Activated CD4-positive, alpha-beta memory T cell treated with anti-CD3 and anti-CD28 coated beads for 36 hours (primary cell): ENCODE measurements at regions of chr9 and their contacts with region 1.

Region 1: DNA sequence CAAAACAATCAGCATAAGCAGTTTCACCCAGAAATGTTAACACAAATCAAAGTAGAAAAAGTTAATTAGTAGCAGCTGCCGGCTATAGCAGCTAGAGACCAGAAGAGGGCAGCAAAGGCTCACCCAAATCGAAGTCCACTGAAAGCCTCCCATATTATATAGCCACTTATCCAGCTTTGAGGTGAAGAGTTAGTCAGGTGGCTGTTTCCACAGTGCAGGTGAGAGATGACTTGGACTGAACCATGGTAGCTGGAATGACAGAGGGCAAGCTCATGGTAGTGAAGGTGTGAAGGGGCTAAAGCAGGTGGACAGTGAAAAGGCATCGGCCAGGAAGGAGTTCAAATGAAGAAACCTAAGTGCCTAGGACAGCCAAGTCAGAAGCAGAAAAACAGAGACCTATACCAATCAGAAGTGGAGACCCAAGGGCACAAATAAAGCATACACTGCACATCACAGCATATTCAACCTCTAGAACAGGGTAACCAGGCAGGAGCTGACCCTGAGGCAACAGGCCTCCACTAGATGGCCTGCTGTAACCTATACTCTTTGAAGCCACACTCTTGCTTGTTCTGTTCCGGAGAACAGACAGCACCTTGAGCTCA is 7.2 kb upstream of the RNF38 start:
- DNase-seq: peak; percentile 77
- H3K4me3 Mint-ChIP-seq: no peak overlapping the region
- H3K27ac Mint-ChIP-seq: peak overlapping the region; percentile 67
- H3K4me1 Mint-ChIP-seq: peaks cover 10% of the 10 kb centered on the region
- H3K27me3 Mint-ChIP-seq: no peaks in the 10 kb centered on the region

Region 2: GRCh38 chr9:36337865-36338264 is 69.4 kb before region 1 on chr9:
- CTCF ChIA-PET with region 1: no interaction called
- POLR2A ChIA-PET with region 1: no interaction called
- intact Hi-C with region 1: no loop called
- DNase-seq: no peak
- H3K4me3 Mint-ChIP-seq: no peak overlapping the region
- H3K27ac Mint-ChIP-seq: no peak overlapping the region
- H3K4me1 Mint-ChIP-seq: peaks cover 12% of the 10 kb centered on the region
- H3K27me3 Mint-ChIP-seq: no peaks in the 10 kb centered on the region

Region 3: GRCh38 chr9:36436909-36437308 is 29.7 kb after region 1 on chr9:
- CTCF ChIA-PET with region 1: interaction called, 27 read pairs
- POLR2A ChIA-PET with region 1: no interaction called
- intact Hi-C with region 1: no loop called
- DNase-seq: no peak
- H3K4me3 Mint-ChIP-seq: no peak overlapping the region
- H3K27ac Mint-ChIP-seq: no peak overlapping the region
- H3K4me1 Mint-ChIP-seq: peaks cover 21% of the 10 kb centered on the region
- H3K27me3 Mint-ChIP-seq: no peaks in the 10 kb centered on the region

Region 4: GRCh38 chr9:36450110-36450732 is 43.0 kb after region 1 on chr9:
- CTCF ChIA-PET with region 1: interaction called, 40 read pairs
- POLR2A ChIA-PET with region 1: interaction called, 4 read pairs
- intact Hi-C with region 1: loop called (anchors 2 kb)
- DNase-seq: peak; percentile 29
- H3K4me3 Mint-ChIP-seq: no peak overlapping the region
- H3K27ac Mint-ChIP-seq: no peak overlapping the region
- H3K4me1 Mint-ChIP-seq: peaks cover 8% of the 10 kb centered on the region
- H3K27me3 Mint-ChIP-seq: no peaks in the 10 kb centered on the region

Region 5: GRCh38 chr9:36487482-36488388 is 80.5 kb after region 1 on chr9:
- CTCF ChIA-PET with region 1: interaction called, 17 read pairs
- POLR2A ChIA-PET with region 1: interaction called, 5 read pairs
- intact Hi-C with region 1: no loop called
- DNase-seq: peak; percentile 93
- H3K4me3 Mint-ChIP-seq: peak overlapping the region; percentile 85
- H3K27ac Mint-ChIP-seq: peak overlapping the region; percentile 97
- H3K4me1 Mint-ChIP-seq: peaks cover 61% of the 10 kb centered on the region
- H3K27me3 Mint-ChIP-seq: no peaks in the 10 kb centered on the region

Region 6: GRCh38 chr9:36566813-36567221 is 159.6 kb after region 1 on chr9:
- CTCF ChIA-PET with region 1: interaction called, 18 read pairs
- POLR2A ChIA-PET with region 1: no interaction called
- intact Hi-C with region 1: no loop called
- DNase-seq: no peak
- H3K4me3 Mint-ChIP-seq: no peak overlapping the region
- H3K27ac Mint-ChIP-seq: no peak overlapping the region
- H3K4me1 Mint-ChIP-seq: no peaks in the 10 kb centered on the region
- H3K27me3 Mint-ChIP-seq: no peaks in the 10 kb centered on the region

Region 7: DNA sequence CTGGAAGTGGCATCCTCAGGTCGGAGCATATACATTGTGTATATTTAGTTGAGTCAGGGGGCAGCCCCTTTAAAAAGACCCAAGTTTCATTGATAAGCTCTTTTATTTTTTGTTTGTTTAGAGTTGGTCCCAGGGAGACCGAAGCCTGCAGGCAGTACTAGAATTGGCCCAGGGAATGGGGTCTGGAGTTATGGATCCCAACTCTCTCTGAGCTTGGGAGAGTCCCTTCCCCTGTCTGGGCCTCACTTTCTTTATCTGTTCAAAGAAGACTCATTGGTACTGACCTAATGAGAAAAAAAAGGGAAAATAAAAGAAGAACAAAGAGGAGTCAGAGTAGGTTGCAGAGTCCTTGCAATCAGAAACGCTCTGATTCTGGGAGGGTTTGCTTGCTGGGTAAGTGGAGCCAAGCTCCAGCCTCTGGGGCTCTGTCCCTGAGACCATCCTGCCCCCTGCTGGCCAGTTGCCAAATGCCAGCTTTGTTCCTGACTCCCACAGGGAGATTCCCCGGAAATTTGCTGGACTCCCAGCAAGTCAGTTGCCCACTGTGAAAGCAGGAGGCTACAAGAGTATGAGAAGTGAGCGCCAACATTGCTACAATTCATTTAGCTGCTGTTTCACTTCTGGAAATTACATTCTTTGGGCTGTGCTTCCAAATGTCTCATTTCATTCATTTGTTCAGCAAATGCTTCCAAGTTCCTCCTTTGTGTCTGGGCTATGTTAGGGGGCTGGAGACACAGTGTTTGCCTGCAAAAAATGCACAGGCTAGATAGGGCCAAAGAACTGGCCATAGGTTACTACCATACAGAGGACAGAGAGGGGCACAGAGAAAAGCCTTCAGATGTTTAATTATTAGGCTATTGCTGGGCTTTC is 321.7 kb after region 1 on chr9:
- CTCF ChIA-PET with region 1: interaction called, 72 read pairs
- POLR2A ChIA-PET with region 1: no interaction called
- intact Hi-C with region 1: loop called (anchors 2 kb)
- DNase-seq: peak; percentile 81
- H3K4me3 Mint-ChIP-seq: no peak overlapping the region
- H3K27ac Mint-ChIP-seq: no peak overlapping the region
- H3K4me1 Mint-ChIP-seq: no peaks in the 10 kb centered on the region
- H3K27me3 Mint-ChIP-seq: no peaks in the 10 kb centered on the region

Region 8: DNA sequence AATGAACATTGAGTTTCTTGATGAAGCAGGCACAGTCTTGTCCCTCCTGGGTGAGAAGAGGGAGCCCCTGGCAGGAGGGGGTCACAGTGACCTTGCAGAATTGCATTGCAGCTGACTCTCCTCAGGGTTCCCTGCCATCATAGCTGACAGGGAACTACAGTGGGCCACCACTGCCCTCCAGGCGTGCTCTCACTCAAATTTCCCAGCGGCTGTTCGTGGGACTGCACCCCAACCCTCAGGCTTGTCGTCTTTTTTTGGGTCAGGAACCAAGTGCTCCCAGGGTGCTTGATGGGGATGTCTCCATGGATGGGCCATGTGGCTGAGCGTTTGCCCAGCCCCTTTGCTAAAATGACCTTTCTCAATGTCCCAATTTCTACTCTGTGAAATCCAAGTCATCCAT is 381.3 kb after region 1 on chr9:
- CTCF ChIA-PET with region 1: no interaction called
- POLR2A ChIA-PET with region 1: no interaction called
- intact Hi-C with region 1: no loop called
- DNase-seq: no peak
- H3K4me3 Mint-ChIP-seq: no peak overlapping the region
- H3K27ac Mint-ChIP-seq: no peak overlapping the region
- H3K4me1 Mint-ChIP-seq: no peaks in the 10 kb centered on the region
- H3K27me3 Mint-ChIP-seq: peaks cover 11% of the 10 kb centered on the region